Cardiac septum (tissue), 1 donor: ENCODE measurements at regions of chr4 and their contacts with region 1.

Region 1: GRCh38 chr4:90246816-90247215 is 119.6 kb downstream of the CCSER1 start:
- DNase-seq: no peak

Region 2: DNA sequence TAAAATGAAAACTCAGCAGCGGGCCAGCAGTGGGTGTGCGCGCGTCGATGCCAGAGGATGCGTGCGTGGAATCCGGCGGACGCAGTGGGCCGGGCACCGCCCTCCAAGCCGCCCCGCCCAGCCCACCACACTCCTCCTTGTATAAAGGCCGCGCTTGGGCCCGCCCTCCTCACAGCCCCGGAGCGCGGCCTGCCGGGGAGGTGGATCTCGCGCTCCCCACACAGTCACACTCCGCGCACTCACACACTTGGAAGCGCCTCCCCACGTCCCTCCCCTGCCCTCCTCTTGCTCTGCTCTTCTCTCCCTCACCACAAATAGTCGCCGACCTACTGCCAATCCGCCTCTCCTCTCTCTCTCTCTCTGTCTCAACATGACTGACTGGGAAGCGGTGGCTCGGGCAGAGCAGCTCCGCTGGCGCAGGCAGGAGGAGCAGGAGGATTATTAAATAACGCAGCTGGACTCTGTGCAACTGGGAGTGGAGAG is 119.6 kb before region 1 on chr4 and contains the start of gene CCSER1:
- intact Hi-C with region 1: loop called (anchors 5 kb)
- DNase-seq: peak; percentile 83
- total RNA-seq, gene CCSER1: 15.7 TPM

Region 3: GRCh38 chr4:90187148-90187884 is 59.5 kb before region 1 on chr4:
- intact Hi-C with region 1: loop called (anchors 2 kb)
- DNase-seq: no peak